A549 (cell line): ENCODE measurements at regions of chr2 and their contacts with region 1.

Region 1: DNA sequence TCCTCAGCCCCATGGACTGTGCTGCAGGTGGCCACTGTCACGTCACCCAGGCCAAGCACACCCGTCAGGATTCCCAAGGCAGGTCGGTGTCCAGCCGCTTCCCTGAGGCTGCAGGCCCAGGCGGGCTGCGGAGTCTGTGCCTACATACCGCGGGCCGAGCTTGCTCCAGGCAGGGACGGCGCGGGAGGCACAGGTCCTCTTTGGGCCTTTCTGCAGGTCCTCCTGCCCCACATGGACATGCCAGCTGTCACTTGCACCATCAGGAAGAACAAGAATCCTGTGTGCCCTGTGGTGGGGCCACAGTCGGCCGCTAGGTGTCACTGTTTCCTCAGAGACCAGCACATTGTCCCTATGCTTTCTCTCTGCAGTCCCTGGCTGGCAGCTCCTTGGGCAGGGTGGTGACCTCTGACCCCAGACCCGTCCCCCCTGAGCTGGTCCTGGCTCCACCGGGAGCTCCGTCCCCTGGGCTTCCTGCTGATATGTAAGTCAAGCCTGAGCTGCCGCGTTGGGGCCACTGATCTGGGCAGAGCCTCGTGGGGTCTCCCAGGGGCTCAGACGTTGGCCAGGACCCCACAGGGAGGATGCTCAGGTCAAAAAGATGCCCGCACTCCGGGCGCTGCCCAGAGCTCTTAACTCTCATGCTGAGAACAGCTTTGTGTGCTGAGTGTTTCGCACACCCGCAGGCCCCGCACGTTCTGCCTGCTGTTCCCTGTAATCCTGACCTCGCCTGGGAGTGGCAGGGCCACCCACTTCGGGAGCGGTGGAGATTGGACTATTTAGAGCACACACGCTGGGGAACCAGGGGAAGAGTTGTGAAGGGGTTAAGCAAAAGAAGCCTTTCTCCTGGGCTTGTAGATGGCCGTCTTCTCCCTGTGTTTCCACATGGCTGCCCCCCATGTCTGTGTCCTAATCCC is 17.3 kb upstream of the AGXT start:
- DNase-seq: peak; percentile 76 to 81
- ATAC-seq: peak; percentile 92 to 98
- H3K4me3 ChIP-seq: no peak overlapping the region
- H3K27ac ChIP-seq: no peak overlapping the region
- H3K4me1 ChIP-seq: no peaks in the 10 kb centered on the region
- CTCF ChIP-seq: peak; percentile 90
- EP300 ChIP-seq: no peak
- POLR2A ChIP-seq: no peak
- RAD21 ChIP-seq: peak; percentile 94 to 97

Region 2: GRCh38 chr2:240840435-240841080 is 10.8 kb before region 1 on chr2:
- CTCF ChIA-PET with region 1: interaction called, 35 read pairs
- POLR2A ChIA-PET with region 1: no interaction called
- DNase-seq: peak; percentile 80 to 82
- ATAC-seq: peak; percentile 86 to 95
- H3K4me3 ChIP-seq: no peak overlapping the region
- H3K27ac ChIP-seq: no peak overlapping the region
- H3K4me1 ChIP-seq: 0 out of 3 replicates have a peak, but pooled peaks cover 3% of the 10 kb centered on the region
- CTCF ChIP-seq: peak; percentile 69
- EP300 ChIP-seq: no peak
- POLR2A ChIP-seq: no peak
- RAD21 ChIP-seq: peak; percentile 69 to 80

Region 3: GRCh38 chr2:240868286-240869108 is 17.2 kb after region 1 on chr2 and contains the start of gene AGXT:
- CTCF ChIA-PET with region 1: interaction called, 44 read pairs
- POLR2A ChIA-PET with region 1: no interaction called
- DNase-seq: no peak
- ATAC-seq: no peak
- H3K4me3 ChIP-seq: no peak within 1 kb of the TSS
- H3K27ac ChIP-seq: no peak within 1 kb of the TSS
- H3K4me1 ChIP-seq: no peaks in the 10 kb centered on the region
- CTCF ChIP-seq: no peak
- EP300 ChIP-seq: no peak
- POLR2A ChIP-seq: no peak
- RAD21 ChIP-seq: no peak
- polyA plus RNA-seq, gene AGXT: not detected in 2 replicates

Region 4: DNA sequence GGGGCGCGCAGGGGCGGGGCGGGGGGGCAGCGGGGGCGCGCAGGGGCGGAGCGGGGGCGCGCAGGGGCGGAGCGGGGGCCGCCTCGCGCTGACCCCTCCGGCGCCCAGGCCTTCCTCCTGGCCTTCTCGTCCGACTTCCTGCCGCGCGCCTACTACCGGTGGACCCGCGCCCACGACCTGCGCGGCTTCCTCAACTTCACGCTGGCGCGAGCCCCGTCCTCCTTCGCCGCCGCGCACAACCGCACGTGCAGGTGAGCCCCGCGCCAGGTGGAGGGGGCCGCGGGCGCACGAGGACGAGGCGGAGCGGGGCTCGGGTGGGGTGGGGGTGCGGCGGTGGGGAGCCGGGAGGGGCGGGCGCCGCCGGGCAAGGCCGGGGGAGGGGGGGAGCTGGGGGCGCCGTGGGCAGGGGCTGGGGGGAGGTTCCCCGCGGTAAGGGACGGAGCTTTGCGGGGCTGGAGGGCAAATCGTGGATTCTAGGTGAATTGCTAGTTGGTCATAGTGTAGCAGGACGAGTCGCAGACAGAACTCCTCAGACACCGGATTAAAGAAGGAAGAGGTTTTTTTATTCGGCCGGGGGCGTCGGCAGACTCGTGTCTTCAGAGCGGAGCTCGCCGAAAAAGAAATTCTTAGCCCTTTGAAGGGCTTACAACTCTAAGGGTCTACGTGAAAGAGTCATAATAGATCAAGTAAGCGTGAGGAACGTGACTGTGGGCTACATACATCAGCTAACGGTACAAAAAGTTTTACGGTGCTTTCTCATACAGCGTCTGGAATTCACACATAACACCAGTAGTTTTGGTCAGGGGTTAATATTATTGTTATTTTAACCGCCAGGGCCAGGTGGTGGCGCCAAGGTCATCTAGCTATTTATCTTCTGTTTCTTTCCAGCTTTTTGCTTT is 367.0 kb after region 1 on chr2:
- CTCF ChIA-PET with region 1: interaction called, 10 read pairs
- POLR2A ChIA-PET with region 1: no interaction called
- DNase-seq: peak; percentile 29 to 57
- ATAC-seq: peak; percentile 44 to 45; a peak in 5 of 6 replicates
- H3K4me3 ChIP-seq: peak overlapping the region; percentile 79
- H3K27ac ChIP-seq: peak overlapping the region; percentile 78 to 97
- H3K4me1 ChIP-seq: peaks cover 7% of the 10 kb centered on the region; the same call in 1 of the 3 replicates
- CTCF ChIP-seq: peak; percentile 56
- EP300 ChIP-seq: no peak
- POLR2A ChIP-seq: peak; percentile 43
- RAD21 ChIP-seq: peak; percentile 27 to 41; a peak in 3 of 5 replicates

Region 5: DNA sequence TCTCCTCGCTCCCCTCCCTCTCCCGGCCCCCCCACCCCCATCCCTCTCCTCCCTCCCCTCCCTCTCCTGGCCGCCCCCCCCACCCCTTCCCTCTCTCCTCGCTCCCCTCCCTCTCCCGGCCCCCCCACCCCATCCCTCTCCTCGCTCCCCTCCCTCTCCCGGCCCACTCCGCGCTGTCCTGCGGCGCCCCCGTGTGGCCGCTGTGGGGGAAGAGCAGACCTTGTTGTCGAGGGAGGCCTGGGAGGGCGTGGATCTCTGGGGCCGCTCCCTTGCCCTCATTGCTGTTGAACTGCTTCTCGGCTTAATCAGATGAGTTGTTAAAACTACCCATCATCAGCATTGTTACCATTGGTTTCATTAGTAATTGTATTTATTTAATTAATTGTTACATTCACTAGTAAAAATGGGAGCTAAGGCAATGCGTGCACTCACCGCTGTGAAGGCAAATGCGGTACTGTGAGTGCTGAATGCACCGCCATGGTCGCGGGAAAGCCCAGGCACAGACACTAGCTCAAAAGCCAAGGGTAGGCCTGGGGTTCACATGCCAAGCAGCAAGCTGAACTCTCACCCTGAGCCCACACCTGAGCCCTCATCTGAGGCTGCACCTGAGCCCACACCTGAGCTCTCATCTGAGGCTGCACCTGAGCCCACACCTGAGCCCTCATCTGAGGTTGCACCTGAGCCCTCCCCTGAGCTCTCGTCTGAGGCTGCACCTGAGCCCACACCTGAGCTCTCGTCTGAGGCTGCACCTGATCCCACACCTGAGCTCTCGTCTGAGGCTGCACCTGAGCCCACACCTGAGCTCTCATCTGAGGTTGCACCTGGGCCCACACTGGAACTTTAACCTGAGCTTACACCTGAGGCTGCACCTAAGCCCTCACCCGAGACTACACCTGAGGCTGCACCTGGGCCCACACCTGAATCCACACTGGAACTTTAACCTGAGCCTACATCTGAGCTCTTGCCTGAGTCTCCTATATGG is 1026.9 kb after region 1 on chr2:
- CTCF ChIA-PET with region 1: interaction called, 17 read pairs
- POLR2A ChIA-PET with region 1: no interaction called
- DNase-seq: peak; percentile 73 to 77
- ATAC-seq: peak; percentile 59 to 65
- H3K4me3 ChIP-seq: no peak overlapping the region
- H3K27ac ChIP-seq: peak overlapping the region in 1 of 2 experiments; percentile 64; a peak in 1 of 6 replicates
- H3K4me1 ChIP-seq: peaks cover 10% of the 10 kb centered on the region; the same call in 2 of the 3 replicates
- CTCF ChIP-seq: peak; percentile 57
- EP300 ChIP-seq: no peak
- POLR2A ChIP-seq: no peak
- RAD21 ChIP-seq: peak; percentile 76 to 78